Heart right ventricle (tissue), 16 donors: ENCODE measurements at regions of chr13 and their contacts with region 1.

Region 1: GRCh38 chr13:80363890-80364503 is 23.1 kb upstream of the SPRY2 start:
- DNase-seq: no peak
- ATAC-seq: peak in 1 of 8 donors; percentile 36
- H3K4me3 ChIP-seq: peak overlapping the region in 6 of 10 donors; percentile 9 to 35 (median 28)
- H3K27ac ChIP-seq: peak overlapping the region in 4 of 10 donors; percentile 7 to 50 (median 39)
- H3K4me1 ChIP-seq: peaks cover 0 to 28% (median 19%) of the 10 kb centered on the region in 9 donors
- H3K27me3 ChIP-seq: no peaks in the 10 kb centered on the region
- CTCF ChIP-seq: peak; percentile 53 to 93 (median 83)

Region 2: DNA sequence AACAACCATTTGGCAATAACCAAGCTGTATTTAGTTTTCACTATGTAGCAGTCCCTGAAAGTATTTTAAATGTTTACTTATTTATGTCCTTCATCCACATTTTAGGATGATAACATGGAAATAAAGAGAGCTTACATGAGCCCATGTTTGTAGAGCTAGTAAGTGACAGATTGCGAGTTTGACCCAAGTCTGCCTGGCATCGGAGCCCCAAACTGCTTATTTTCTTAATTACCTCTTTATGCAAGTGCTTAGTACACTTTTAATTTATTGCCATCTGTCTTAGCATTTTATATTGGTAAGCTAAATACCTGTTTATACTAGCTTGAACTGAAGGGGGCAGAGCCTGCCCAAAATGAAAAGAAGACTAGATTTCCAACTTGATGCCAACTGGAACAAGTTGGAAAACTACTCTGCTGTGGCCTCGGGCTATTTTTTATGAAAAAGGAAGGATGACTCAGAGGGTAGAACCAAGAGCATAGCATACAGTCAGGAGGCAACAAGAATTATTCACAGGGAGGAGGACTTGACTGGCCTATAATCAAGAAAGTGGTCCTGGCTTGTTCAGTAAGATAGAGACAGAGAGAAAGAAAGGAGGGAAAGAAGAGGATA is 732.8 kb before region 1 on chr13:
- intact Hi-C with region 1: loop called in 1 of 10 experiments (anchors 10 kb)
- DNase-seq: peak in 1 of 2 donors; percentile 7
- ATAC-seq: peak; percentile 60 to 93 (median 78)
- H3K4me3 ChIP-seq: no peak overlapping the region
- H3K27ac ChIP-seq: peak overlapping the region in 1 of 10 donors; percentile 35
- H3K4me1 ChIP-seq: peaks cover 0 to 6% (median 0%) of the 10 kb centered on the region in 9 donors
- H3K27me3 ChIP-seq: no peaks in the 10 kb centered on the region
- CTCF ChIP-seq: peak in 8 of 9 donors; percentile 14 to 55 (median 43)

Region 3: GRCh38 chr13:79775830-79776229 is 588.2 kb before region 1 on chr13:
- intact Hi-C with region 1: loop called in 7 of 10 experiments (anchors 10 kb)
- DNase-seq: peak in 1 of 2 donors; percentile 36
- ATAC-seq: peak in 7 of 8 donors; percentile 58 to 82 (median 71)
- H3K4me3 ChIP-seq: no peak overlapping the region
- H3K27ac ChIP-seq: no peak overlapping the region
- H3K4me1 ChIP-seq: peaks cover 0 to 19% (median 0%) of the 10 kb centered on the region in 9 donors
- H3K27me3 ChIP-seq: no peaks in the 10 kb centered on the region
- CTCF ChIP-seq: peak in 8 of 9 donors; percentile 37 to 76 (median 64)

Region 4: GRCh38 chr13:80399340-80400163 is 35.6 kb after region 1 on chr13:
- intact Hi-C with region 1: no loop called
- DNase-seq: no peak
- ATAC-seq: no peak
- H3K4me3 ChIP-seq: no peak overlapping the region
- H3K27ac ChIP-seq: no peak overlapping the region
- H3K4me1 ChIP-seq: peaks cover 0 to 8% (median 0%) of the 10 kb centered on the region in 9 donors
- H3K27me3 ChIP-seq: no peaks in the 10 kb centered on the region
- CTCF ChIP-seq: no peak

Region 5: GRCh38 chr13:80454245-80454644 is 90.2 kb after region 1 on chr13:
- intact Hi-C with region 1: loop called in 1 of 10 experiments (anchors 5 kb)
- DNase-seq: no peak
- ATAC-seq: peak in 1 of 8 donors; percentile 29
- H3K4me3 ChIP-seq: no peak overlapping the region
- H3K27ac ChIP-seq: no peak overlapping the region
- H3K4me1 ChIP-seq: peaks cover 0 to 42% (median 14%) of the 10 kb centered on the region in 9 donors
- H3K27me3 ChIP-seq: peaks cover 0 to 18% (median 0%) of the 10 kb centered on the region in 7 donors
- CTCF ChIP-seq: no peak

Region 6: DNA sequence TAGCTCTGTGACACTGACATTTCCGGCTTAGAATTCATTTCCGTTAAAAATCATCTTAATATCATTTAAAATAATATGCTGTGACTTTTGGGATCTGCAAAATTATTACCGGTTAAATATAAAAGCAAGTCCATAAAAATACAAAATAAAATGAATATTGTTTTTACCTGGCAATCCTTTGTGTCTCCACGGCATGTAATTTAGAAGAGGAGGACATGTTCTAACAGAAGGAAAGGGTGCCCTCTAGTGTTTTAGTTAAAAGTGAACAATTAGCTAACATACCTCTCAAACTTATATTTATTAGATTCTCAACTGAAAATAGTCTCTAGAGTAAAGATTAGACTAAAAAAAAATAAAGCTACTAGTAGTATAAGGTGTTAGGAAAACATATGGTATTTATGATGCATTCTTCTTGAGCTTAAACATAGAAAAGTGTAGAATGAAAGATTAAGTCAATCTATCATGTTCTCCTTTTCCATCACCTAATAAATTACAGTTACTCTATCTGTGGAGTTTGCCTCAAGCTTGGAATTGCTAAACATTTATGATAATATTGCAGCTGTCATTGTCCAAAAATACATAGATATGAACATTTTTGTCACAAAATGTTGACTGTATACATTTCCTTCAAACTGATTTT is 653.6 kb after region 1 on chr13:
- intact Hi-C with region 1: loop called in 2 of 10 experiments (anchors 10 kb)
- DNase-seq: no peak
- ATAC-seq: peak in 4 of 8 donors; percentile 44 to 67 (median 49)
- H3K4me3 ChIP-seq: peak overlapping the region in 3 of 10 donors; percentile 10 to 28 (median 20)
- H3K27ac ChIP-seq: no peak overlapping the region
- H3K4me1 ChIP-seq: peaks cover 0 to 6% (median 0%) of the 10 kb centered on the region in 9 donors
- H3K27me3 ChIP-seq: no peaks in the 10 kb centered on the region
- CTCF ChIP-seq: peak; percentile 23 to 82 (median 68)